ENCODE measurements at regions of chr7 and their contacts with region 1.

Region 1: DNA sequence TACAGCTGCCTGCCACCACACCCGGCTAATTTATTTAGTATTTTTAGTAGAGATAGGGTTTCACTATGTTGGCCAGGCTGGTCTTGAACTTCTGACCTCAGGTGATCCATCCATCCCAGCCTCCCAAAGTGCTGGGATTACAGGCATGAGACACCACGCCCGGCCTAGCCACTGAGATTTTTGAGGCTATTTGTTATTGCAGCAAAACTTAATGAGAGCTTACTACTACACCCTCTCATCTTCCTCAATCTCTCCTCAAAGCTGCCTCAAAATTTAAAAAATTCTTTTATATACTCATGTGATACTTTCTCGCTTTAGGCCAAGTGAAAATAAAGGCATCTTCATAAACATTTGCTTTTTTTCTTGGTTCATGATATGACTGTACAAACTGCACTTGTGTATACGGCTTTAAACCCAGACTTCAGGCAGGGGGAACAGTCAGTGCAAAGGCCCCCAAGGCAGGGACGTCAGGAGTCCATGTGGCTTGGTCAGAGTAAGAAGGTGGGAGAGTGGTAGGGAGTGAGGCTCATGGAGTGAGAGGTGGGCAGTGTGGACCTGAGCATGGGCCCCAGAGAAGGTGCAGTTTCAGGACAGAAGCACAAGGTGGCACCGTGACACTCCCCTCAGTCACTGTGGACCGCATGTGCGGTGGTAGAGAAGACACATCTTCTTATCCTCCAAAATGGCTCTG is 55.5 kb downstream of the SYPL1 start:
- DNase-seq: peak; percentile 84
- CTCF ChIP-seq: peak; percentile 85

Region 2: GRCh38 chr7:106153891-106154449 is 97.3 kb after region 1 on chr7:
- in situ Hi-C with region 1: loop called (anchors 5 kb)
- DNase-seq: peak; percentile 78
- CTCF ChIP-seq: peak; percentile 86

Region 3: GRCh38 chr7:106461993-106462859 is 405.6 kb after region 1 on chr7:
- in situ Hi-C with region 1: loop called (anchors 25 kb)
- DNase-seq: peak; percentile 15
- CTCF ChIP-seq: peak; percentile 38

Measured in GM13976 (cell line).